ENCODE measurements at regions of chr15 and their contacts with region 1.

Region 1: GRCh38 chr15:70584838-70585706 is 178.3 kb downstream of the UACA start:
- H3K4me3 ChIP-seq: peak overlapping the region; percentile 43
- H3K27ac ChIP-seq: peak overlapping the region; percentile 77
- H3K4me1 ChIP-seq: peaks cover 16% of the 10 kb centered on the region; the same call in 1 of the 2 replicates
- CTCF ChIP-seq: peak; percentile 81

Region 2: DNA sequence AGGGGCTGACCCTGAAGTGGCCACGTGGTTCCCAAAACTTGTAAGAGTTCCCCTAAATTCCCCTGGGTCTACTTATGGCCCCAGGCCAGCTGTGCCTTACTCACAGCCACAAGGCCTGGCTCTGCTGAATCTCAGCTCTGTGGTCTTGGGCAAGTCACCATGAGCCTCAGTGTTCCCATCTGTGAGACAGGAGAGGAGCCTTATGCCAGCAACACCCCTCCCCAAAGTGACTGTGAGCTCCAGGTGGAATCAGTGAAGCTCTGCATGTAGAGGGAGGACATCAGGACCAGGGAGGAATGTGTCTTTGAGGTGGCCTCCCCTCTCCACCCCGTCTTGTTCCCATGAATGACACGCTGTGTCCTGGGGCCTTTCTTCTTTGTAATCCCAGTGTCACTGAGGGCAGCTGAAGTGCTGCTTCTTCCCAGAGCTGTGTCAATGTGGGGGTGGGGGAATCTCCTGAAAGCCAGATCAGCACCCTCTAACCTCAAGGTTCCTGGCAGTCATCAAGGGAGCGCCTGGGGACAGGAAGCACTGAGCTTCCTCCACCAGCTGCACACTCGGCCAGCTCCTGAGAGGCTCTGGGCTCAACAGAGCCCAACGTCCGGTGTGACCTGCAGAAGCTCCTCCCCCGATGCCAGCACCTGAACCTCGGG is 80.6 kb before region 1 on chr15:
- CTCF ChIA-PET with region 1: interaction called, 50 read pairs
- POLR2A ChIA-PET with region 1: interaction called, 7 read pairs
- H3K4me3 ChIP-seq: no peak overlapping the region
- H3K27ac ChIP-seq: peak overlapping the region; percentile 78
- H3K4me1 ChIP-seq: peaks cover 54% of the 10 kb centered on the region
- CTCF ChIP-seq: no peak

Region 3: GRCh38 chr15:70538278-70538677 is 46.8 kb before region 1 on chr15:
- CTCF ChIA-PET with region 1: interaction called, 10 read pairs
- POLR2A ChIA-PET with region 1: interaction called, 5 read pairs
- H3K4me3 ChIP-seq: no peak overlapping the region
- H3K27ac ChIP-seq: no peak overlapping the region
- H3K4me1 ChIP-seq: no peaks in the 10 kb centered on the region
- CTCF ChIP-seq: no peak

Region 4: DNA sequence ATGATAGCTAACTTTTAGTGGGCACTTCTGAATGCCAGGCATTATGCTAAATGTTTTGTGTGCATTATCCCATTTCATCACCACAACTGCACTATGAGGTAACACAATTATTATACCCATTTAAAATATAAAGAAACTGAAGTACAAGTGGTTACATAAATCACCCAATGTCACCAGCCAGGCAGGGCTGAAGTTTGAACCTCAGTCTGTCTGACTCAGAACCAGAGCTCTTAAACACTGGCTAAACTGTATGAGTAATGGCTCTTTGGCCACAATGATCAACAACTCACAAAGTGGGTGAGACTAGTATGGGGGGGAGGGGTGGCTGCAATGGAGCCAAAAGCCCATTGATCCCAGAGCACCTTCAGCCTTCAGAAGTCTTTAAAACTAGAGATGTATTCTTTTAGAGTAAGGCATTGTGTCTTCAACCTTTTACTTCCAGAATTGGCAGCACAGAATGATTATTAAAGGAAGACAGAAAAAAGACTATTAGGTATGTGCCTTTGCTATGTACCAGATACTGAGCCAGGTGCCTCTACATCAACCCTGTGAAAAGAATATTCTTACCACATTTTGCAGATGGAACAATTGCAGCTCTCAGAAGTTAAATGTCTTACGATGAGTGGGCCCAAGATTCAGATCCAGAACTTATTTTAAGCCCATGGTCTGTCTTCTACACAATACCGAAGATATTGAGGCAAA is 11.4 kb after region 1 on chr15:
- CTCF ChIA-PET with region 1: interaction called, 16 read pairs
- POLR2A ChIA-PET with region 1: no interaction called
- H3K4me3 ChIP-seq: no peak overlapping the region
- H3K27ac ChIP-seq: no peak overlapping the region
- H3K4me1 ChIP-seq: no peaks in the 10 kb centered on the region
- CTCF ChIP-seq: no peak